PC-3 (cell line): ENCODE measurements at regions of chr17 and their contacts with region 1.

Region 1: DNA sequence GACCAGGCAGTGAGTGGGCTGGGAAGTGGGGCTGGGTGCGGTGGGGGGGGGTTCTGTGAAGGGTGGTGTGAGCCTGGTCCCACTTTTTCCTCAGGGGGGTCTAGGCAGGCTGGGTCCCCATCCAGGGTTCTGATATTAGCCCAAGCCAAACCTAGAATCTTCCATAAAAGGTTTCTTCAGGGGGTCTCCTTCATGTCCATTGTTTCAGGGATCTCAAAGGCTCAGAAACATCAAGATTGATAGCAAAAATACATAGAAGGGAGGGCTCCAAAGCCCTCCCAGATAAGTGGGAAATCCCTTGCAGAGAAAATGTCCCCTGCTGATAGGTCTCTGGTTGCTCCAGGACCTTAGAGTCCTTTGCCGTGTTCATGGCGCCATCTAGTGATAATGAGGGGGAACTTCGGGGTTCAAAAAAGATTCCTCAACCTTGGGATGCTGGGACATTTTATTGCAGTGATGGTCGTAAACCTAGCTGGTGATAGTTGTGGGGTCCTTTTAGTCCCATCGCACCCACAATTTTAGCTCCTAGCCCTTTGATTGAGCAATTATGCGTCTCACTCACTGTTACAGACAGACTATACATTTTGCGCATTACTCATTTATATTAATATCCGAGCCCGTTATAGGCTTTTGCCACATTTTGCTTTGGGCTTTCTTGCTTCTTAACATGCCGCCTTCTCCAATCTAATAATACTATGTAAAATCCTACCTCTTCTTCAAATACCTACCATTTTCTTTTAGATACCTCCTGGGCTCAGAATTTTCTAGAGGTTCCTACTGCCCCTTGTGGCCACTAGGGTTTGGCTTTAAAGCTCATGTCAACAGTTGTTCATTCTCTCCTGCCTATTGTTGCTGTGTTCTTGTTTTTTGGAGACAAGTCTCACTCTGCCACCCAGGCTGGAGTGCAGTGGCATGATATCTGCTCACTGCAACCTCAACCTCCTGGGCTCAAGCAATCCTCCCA is 35.1 kb downstream of the IGF2BP1 start:
- DNase-seq: peak; percentile 94
- ATAC-seq: peak; percentile 87
- H3K4me3 ChIP-seq: peak overlapping the region; percentile 46; the same call in 1 of the 2 replicates
- H3K27ac ChIP-seq: no peak overlapping the region
- H3K4me1 ChIP-seq: peaks cover 7% of the 10 kb centered on the region
- H3K27me3 ChIP-seq: no peaks in the 10 kb centered on the region
- CTCF ChIP-seq: peak; percentile 88

Region 2: GRCh38 chr17:48671697-48672171 is 360.5 kb before region 1 on chr17:
- CTCF ChIA-PET with region 1: interaction called, 4 read pairs
- POLR2A ChIA-PET with region 1: no interaction called
- intact Hi-C with region 1: loop called (anchors 5 kb)
- DNase-seq: peak; percentile 95
- ATAC-seq: peak; percentile 72
- H3K4me3 ChIP-seq: peak overlapping the region; percentile 64
- H3K27ac ChIP-seq: no peak overlapping the region
- H3K4me1 ChIP-seq: peaks cover 5% of the 10 kb centered on the region; the same call in 1 of the 2 replicates
- H3K27me3 ChIP-seq: no peaks in the 10 kb centered on the region
- CTCF ChIP-seq: peak; percentile 96

Region 3: DNA sequence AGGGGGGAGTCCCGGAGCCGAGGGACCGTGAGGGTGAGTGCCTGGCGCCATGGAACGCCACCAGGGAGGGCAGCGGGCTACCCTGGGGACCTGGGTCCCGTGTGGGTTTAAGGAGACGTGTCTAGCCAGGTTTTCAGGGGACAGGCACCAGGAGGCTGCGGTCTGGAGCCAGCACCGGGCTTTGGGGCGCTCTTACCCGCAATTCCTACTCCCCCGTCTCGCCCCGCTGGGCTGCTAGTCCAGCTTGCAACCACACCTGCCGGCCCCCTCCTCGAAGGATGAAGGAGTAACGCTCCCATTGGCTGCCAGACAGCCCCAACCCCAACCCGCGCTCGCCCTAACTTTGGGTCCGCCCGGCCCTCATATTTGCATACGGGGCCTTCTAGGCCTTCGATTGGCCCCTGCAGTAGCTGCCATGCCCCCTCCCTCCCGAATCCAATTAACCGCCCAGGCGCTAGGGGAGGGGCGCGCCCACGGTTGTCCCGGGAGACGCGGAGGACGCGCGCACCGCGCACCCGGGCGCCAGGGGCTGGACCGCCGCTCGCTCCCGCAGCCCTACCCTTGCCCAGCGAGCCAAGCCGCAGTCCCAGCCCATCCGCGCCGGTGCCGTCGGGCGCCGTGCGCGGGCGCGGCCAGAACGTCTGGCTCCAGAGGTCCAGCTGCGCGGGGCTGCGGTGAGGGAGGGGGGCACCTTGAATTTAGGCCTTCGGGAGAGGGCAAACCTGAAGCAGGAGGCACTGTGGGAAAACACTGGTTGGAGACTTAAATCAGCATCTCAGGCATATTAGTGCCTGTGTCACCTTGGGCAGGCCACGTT is 215.3 kb before region 1 on chr17 and contains the start of gene TTLL6:
- CTCF ChIA-PET with region 1: no interaction called
- POLR2A ChIA-PET with region 1: no interaction called
- intact Hi-C with region 1: loop called (anchors 5 kb)
- DNase-seq: peak; percentile 98
- ATAC-seq: peak; percentile 96
- H3K4me3 ChIP-seq: peak within 1 kb of the TSS; percentile 65
- H3K27ac ChIP-seq: no peak within 1 kb of the TSS
- H3K4me1 ChIP-seq: peaks cover 12% of the 10 kb centered on the region
- H3K27me3 ChIP-seq: no peaks in the 10 kb centered on the region
- CTCF ChIP-seq: no peak
- total RNA-seq, gene TTLL6: 0.29 and 0.40 TPM in 2 replicates

Region 4: DNA sequence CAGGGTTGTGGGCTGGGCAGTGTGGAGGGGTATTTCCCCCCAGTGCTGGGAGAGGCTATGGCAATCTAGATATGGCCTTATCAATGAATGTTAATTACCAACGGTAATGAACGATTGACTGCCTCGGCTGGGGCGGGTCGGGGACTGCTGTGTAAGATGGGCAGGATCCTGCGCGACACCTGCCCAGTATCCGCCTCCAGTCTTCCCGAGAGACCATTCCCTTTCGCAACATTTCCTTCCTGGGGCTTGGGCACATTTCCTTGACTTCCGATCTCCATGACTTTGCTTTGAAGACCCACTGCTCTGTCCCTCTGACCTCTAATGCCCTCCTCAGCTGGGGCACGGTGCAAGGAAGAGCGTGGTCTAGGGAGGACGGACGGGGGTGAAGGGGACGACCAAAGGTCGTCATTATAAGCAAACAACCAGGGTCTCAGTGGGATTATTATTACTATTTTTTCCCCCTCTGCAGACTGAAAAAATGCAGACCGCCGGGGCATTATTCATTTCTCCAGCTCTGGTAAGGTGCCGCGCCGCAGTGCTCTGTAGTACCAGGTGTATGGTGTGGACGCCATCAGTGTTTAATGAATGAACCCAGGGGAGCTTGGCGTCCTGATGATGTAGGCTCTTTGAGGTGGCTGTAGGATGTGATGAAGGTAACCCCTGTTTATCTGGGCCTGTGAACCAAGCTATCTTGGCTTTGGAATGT is 139.2 kb before region 1 on chr17:
- CTCF ChIA-PET with region 1: interaction called, 13 read pairs
- POLR2A ChIA-PET with region 1: interaction called, 5 read pairs
- intact Hi-C with region 1: no loop called
- DNase-seq: no peak
- ATAC-seq: no peak
- H3K4me3 ChIP-seq: peak overlapping the region; percentile 95
- H3K27ac ChIP-seq: peak overlapping the region; percentile 69
- H3K4me1 ChIP-seq: peaks cover 29% of the 10 kb centered on the region
- H3K27me3 ChIP-seq: no peaks in the 10 kb centered on the region
- CTCF ChIP-seq: no peak

Region 5: GRCh38 chr17:48908047-48908843 is 124.0 kb before region 1 on chr17 and contains the start of gene UBE2Z:
- CTCF ChIA-PET with region 1: no interaction called
- POLR2A ChIA-PET with region 1: no interaction called
- intact Hi-C with region 1: no loop called
- DNase-seq: peak; percentile 98
- ATAC-seq: peak; percentile 93
- H3K4me3 ChIP-seq: peak within 1 kb of the TSS; percentile 85
- H3K27ac ChIP-seq: peak within 1 kb of the TSS; percentile 74
- H3K4me1 ChIP-seq: peaks cover 36% of the 10 kb centered on the region
- H3K27me3 ChIP-seq: no peaks in the 10 kb centered on the region
- CTCF ChIP-seq: peak; percentile 40; the same call in 1 of the 2 replicates
- total RNA-seq, gene UBE2Z: 131 and 144 TPM in 2 replicates

Region 6: DNA sequence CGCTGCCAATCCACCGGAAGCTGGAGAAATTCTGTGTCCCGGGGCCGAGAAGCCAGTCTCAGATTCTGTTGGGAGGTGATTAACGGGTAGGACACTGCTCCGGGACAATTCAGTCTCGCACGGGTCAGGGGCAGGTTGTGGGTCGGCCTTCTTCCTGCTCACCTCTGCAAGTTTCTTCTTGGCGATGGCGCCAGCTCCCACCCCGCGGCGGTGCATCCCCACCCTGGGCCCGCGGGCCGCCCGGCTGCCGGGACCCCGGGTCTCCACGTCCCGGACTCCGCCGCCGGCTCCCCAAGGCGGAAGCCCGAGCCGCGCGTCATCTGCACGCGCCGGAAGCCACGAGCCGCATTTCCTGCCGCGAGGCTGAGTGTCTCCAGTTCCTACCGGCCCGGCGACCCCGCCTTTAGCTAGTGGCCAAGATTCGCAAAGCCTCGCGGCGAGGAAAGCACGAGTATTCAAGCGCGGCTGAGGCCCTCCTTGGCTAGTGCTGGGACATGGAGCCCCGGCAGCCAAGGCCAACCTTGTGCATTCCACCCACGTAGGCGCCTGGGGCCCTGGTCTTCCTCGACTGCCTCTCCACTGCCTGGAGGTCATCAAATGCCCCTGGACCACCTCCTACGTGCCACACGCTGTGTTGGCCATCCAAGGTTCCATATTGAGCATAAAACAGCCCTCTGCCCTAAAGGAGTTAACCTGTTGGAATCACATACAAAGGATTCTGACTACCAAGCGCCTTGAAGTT is 87.6 kb before region 1 on chr17 and contains the start of gene SNF8:
- CTCF ChIA-PET with region 1: interaction called, 11 read pairs
- POLR2A ChIA-PET with region 1: interaction called, 3 read pairs
- intact Hi-C with region 1: no loop called
- DNase-seq: peak; percentile 97
- ATAC-seq: peak; percentile 95
- H3K4me3 ChIP-seq: peak within 1 kb of the TSS; percentile 80
- H3K27ac ChIP-seq: peak within 1 kb of the TSS; percentile 50
- H3K4me1 ChIP-seq: peaks cover 13% of the 10 kb centered on the region
- H3K27me3 ChIP-seq: no peaks in the 10 kb centered on the region
- CTCF ChIP-seq: no peak
- total RNA-seq, gene SNF8: 278 TPM in 2 replicates

Region 7: DNA sequence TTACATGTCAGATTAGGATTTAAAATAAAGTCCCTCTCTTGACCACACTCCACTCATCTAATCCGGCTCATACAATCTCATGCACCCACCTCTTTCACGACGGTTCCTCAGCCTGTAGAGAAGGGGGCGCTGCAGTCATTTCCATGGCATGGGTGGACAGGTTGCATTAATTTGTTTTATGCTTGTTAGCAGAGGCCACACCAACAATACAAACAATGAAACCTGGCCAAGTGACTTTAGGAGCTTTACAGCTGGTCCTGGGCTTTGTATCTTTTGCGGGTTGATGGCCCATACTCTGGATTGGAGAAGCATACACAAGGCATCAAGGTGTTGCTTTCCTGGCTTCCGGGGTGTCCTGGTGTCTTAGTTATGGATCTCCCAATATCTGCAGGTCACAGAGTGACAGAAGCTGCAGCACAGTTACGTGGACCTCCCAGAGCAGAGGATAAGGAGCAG is 77.9 kb before region 1 on chr17:
- CTCF ChIA-PET with region 1: interaction called, 34 read pairs
- POLR2A ChIA-PET with region 1: no interaction called
- intact Hi-C with region 1: loop called (anchors 1 kb)
- DNase-seq: peak; percentile 81
- ATAC-seq: peak; percentile 97
- H3K4me3 ChIP-seq: no peak overlapping the region
- H3K27ac ChIP-seq: no peak overlapping the region
- H3K4me1 ChIP-seq: peaks cover 4% of the 10 kb centered on the region; the same call in 1 of the 2 replicates
- H3K27me3 ChIP-seq: no peaks in the 10 kb centered on the region
- CTCF ChIP-seq: peak; percentile 92

Region 8: GRCh38 chr17:49227436-49228261 is 195.4 kb after region 1 on chr17:
- CTCF ChIA-PET with region 1: interaction called, 5 read pairs
- POLR2A ChIA-PET with region 1: interaction called, 11 read pairs
- intact Hi-C with region 1: loop called (anchors 1 kb)
- DNase-seq: peak; percentile 88
- ATAC-seq: peak; percentile 64
- H3K4me3 ChIP-seq: no peak overlapping the region
- H3K27ac ChIP-seq: no peak overlapping the region
- H3K4me1 ChIP-seq: peaks cover 12% of the 10 kb centered on the region; the same call in 1 of the 2 replicates
- H3K27me3 ChIP-seq: peaks cover 24% of the 10 kb centered on the region
- CTCF ChIP-seq: peak; percentile 97